ENCODE measurements at regions of chr7 and their contacts with region 1.

Region 1: GRCh38 chr7:113421696-113422330 is 303.5 kb upstream of the SMIM30 start:
- DNase-seq: peak; percentile 22 to 92 (median 70)

Region 2: DNA sequence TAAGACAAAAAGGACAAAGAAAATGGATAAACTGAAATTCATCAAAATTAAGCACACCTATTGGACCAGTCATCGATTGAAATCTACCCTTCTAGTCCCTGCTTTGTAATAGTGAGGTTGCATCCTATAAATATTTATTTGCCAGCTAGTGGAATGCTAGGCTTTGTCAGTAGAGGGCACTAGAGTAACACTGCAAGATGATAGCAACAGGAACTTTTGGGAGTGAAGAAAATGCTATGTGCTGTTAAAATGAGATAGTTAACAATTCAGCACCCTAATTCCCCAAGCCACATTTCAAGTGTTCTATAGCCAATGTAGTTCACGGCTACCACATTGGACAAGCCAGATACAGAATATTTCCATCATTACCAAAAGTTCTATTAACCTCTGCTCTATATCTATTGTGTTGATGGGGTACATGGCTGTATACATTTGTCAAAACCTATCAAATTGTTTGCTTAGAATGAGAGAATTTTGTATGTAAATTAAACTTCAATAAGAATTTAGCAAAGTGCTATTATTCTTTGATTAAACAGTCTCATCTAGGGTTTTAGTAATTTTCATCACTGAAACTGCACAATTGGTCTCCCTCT is 871.2 kb before region 1 on chr7:
- intact Hi-C with region 1: loop called (anchors 1 kb)
- DNase-seq: no peak

Region 3: DNA sequence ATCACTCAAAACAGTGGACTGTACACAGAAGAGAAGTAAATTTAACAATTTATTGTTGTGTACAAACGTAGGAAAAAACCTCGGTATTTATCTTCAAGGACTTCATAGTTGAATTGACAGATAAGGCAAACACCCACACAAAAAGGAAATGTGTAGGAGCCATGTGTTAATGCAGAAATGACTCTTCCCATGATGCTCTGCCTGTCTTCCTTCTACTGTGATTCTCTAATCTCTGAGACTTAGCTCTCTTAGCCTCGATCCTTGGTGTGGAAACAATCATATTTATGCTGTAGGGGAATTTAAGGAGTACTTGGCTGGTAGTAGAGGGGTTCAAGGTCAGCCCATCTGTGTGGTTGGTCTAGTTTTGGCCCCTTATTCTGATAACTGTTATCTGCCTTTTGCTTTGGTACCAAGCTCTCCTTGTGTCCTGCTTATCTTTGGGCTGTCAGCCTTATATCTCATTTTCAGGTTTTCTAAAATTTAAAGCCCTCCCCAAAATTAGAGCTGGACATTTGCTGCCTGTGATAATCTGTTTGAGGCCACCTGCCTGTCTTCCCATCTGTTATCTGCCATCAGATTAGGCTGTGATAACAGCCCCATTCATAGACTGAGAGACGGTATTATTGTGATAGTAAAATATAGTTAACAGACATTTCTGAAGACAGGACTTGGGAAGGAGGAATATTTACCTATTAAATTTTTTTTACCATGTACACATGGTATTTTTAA is 416.9 kb before region 1 on chr7:
- intact Hi-C with region 1: loop called (anchors 5 kb)
- DNase-seq: no peak

Region 4: DNA sequence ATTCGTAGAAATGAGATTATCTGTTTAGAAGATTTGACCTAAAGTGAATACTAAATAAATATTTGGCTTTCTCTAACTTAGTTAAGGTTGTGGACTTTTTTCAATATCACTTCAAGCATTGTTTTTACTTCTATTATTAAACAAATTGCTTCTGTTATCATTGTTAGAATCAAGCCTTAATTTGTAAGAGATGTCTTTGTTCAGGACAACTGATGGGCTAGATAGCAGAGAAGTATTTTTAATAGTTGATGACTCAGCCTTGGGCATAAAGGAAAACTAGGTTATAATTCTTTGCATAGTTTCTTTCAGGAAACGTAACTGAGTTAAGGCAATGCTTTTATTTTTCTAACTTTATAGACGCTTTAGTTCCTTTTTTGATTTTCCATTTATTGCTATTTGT is 174.6 kb before region 1 on chr7:
- intact Hi-C with region 1: no loop called
- DNase-seq: no peak

Region 5: GRCh38 chr7:114302858-114303257 is 881.0 kb after region 1 on chr7:
- intact Hi-C with region 1: no loop called
- DNase-seq: no peak